ENCODE measurements at regions of chr1 and their contacts with region 1.

Region 1: GRCh38 chr1:109160071-109160840 is 46.3 kb downstream of the ELAPOR1 start:
- DNase-seq: no peak
- ATAC-seq: no peak
- H3K4me3 ChIP-seq: no peak overlapping the region
- H3K27ac ChIP-seq: no peak overlapping the region
- H3K4me1 ChIP-seq: no peaks in the 10 kb centered on the region
- H3K27me3 ChIP-seq: no peaks in the 10 kb centered on the region
- CTCF ChIP-seq: no peak

Region 2: GRCh38 chr1:109426278-109427170 is 266.3 kb after region 1 on chr1 and contains the start of gene PSMA5:
- CTCF ChIA-PET with region 1: interaction called, 10 read pairs
- POLR2A ChIA-PET with region 1: no interaction called
- in situ Hi-C with region 1: no loop called
- intact Hi-C with region 1: no loop called
- DNase-seq: peak; percentile 89
- ATAC-seq: peak; percentile 98
- H3K4me3 ChIP-seq: peak within 1 kb of the TSS; percentile 93 to 95
- H3K27ac ChIP-seq: peak within 1 kb of the TSS; percentile 96
- H3K4me1 ChIP-seq: peaks cover 10% of the 10 kb centered on the region
- H3K27me3 ChIP-seq: no peaks in the 10 kb centered on the region
- CTCF ChIP-seq: no peak
- total RNA-seq, gene PSMA5: 118 TPM